PC-3 (cell line): ENCODE measurements at regions of chr4 and their contacts with region 1.

Region 1: GRCh38 chr4:7206911-7207567 is 14.7 kb downstream of the SORCS2 start:
- DNase-seq: peak; percentile 82
- ATAC-seq: peak; percentile 82
- H3K4me3 ChIP-seq: no peak overlapping the region
- H3K27ac ChIP-seq: peak overlapping the region; percentile 98
- H3K4me1 ChIP-seq: peaks cover 77% of the 10 kb centered on the region
- H3K27me3 ChIP-seq: no peaks in the 10 kb centered on the region
- CTCF ChIP-seq: no peak

Region 2: GRCh38 chr4:7261087-7261486 is 54.0 kb after region 1 on chr4:
- CTCF ChIA-PET with region 1: no interaction called
- POLR2A ChIA-PET with region 1: interaction called, 4 read pairs
- intact Hi-C with region 1: loop called (anchors 5 kb)
- DNase-seq: no peak
- ATAC-seq: no peak
- H3K4me3 ChIP-seq: no peak overlapping the region
- H3K27ac ChIP-seq: peak overlapping the region; percentile 50
- H3K4me1 ChIP-seq: peaks cover 47% of the 10 kb centered on the region
- H3K27me3 ChIP-seq: no peaks in the 10 kb centered on the region
- CTCF ChIP-seq: no peak

Region 3: DNA sequence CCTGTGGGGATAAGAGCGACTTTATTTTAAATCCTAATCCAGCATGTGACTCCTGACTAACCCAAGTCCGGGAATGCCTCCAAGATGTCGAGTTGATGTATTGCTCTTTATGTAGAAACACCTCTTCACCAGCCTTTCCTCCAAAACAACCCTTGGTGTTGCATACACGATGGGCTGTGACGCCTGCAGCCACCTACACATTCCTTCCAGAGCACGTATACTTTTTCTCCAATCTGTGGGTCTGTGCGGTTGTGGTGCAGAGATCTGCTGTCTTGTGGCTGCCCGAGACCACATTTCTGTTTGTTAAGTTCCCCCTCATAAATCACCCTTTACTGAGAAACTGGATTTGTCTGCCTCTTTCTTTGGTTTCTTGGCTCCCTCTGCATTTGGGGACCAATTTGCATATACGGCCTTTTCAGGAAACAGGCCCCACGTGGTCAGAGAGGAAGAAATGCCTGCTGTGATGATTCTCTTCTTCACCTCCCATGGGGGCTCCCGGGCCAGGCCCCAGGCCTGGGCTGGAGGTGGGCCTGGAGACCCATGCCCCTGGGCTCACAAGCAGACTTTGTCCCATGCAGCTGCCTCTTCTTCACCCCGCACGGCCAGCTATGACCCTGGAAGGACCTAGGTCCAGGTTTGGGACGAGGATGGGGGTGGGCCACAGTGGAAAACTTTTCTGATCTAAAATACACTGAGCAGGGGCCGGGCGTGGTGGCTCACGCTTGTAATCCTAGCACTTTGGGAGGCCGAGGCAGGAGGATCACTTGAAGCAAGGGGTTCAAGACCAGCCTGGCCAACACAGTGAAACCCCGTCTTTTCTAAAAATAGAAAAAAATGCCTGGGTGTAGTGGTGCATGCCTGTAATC is 754.0 kb after region 1 on chr4:
- CTCF ChIA-PET with region 1: no interaction called
- POLR2A ChIA-PET with region 1: no interaction called
- intact Hi-C with region 1: no loop called
- DNase-seq: peak; percentile 37
- ATAC-seq: no peak
- H3K4me3 ChIP-seq: no peak overlapping the region
- H3K27ac ChIP-seq: peak overlapping the region; percentile 30
- H3K4me1 ChIP-seq: peaks cover 47% of the 10 kb centered on the region
- H3K27me3 ChIP-seq: no peaks in the 10 kb centered on the region
- CTCF ChIP-seq: no peak